GM18951 (cell line): ENCODE measurements at regions of chr2 and their contacts with region 1.

Region 1: DNA sequence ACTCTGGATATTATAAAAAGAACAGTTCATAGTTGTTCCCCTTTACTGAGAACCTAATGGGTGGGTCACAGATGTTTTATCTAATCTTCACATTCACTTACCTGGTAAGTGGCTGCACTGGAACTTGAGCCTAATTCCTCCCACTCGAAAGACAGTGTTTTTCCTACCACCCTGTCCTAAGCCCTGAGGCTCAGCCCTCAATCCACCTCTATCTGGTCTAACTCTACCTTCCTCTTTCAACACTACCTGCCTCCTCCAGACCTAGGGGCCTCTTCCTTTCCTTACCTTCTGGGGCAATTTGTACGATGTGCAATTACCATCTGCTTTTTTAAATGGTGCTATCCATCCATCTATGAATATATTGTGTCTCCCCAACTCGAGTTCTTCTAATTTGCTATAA is 9.7 kb upstream of the KIF3C start:
- POLR2A ChIP-seq: no peak

Region 2: GRCh38 chr2:26122630-26123029 is 130.7 kb after region 1 on chr2:
- in situ Hi-C with region 1: no loop called
- POLR2A ChIP-seq: no peak

Region 3: DNA sequence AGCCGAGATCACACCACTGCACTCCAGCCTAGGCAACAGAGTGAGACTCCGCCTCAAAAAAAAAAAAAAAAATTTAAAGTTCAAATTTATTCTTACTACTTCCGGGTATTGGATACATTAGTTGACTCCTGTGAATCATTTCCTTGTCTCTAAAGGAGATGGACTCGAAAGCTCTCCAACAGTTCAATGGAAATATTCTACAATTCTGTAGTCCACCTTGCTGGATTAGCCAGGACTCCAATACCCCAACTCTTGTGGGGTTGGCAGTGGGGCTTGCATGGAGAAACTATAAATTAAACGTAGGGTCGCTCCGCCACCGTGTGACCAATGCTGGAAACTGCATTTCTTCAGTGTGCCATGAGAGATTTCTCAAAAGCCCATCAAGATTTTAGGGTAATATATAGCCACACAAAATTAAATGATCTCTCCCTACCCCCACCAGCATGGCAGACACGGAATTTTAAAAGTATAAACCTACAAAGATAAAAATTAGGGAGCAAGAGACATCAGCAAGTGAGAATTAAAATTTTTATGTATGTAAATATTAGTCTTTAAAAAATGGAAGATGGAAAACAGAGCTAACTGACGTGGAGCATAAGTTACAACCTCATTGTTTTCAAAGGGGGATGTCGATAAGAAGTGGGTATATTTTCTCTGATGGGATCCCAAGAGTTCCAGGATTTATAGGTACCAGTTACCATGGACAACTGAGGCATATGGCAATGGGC is 153.2 kb after region 1 on chr2:
- in situ Hi-C with region 1: loop called (anchors 10 kb)
- POLR2A ChIP-seq: no peak

Region 4: DNA sequence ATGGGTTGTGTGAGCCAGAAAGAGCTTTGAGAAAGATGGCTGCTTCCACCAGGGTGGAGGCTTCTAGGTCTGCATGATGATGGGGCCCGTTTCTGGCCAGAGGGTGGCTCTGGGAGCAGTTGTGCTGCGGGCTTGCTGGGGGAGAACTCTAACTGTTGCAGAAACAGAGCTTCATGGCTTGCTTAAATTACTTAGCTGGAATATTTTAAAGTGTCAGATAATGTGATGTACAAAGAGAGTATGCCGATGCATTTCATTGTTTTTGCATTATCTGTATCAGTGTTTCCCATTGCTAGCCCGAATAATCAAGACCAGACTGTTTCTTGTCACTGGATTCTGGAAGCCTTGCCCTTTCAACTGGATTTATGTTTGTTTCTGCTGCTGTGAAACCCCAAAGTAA is 403.4 kb after region 1 on chr2:
- in situ Hi-C with region 1: no loop called
- POLR2A ChIP-seq: no peak